ENCODE measurements at regions of chr7 and their contacts with region 1.

Region 1: GRCh38 chr7:11427686-11428273 is 404.2 kb downstream of the THSD7A start:
- DNase-seq: peak; percentile 30
- H3K4me3 Mint-ChIP-seq: no peak overlapping the region
- H3K27ac Mint-ChIP-seq: no peak overlapping the region
- H3K4me1 Mint-ChIP-seq: no peaks in the 10 kb centered on the region
- H3K27me3 Mint-ChIP-seq: no peaks in the 10 kb centered on the region
- CTCF ChIP-seq: peak; percentile 65

Region 2: DNA sequence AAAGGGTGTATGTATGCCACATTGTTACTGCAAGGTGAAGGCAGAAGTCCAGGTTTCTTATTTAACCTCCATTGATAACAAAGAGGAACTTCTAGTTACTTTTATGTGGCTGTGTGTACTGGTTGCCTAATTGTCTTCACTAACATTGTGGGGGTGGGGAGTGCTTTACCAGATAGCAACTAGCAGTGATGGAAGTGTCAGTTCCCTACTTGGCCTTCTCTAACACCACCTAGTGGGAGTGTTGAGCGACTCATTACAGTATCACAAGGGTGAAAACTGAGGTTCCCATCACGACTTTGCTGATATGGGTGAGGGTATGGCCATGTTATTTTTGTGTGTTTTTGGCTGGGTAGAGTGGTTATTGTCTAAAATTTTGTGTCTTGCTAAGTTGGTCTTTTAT is 129.8 kb after region 1 on chr7:
- CTCF ChIA-PET with region 1: no interaction called
- intact Hi-C with region 1: loop called (anchors 1 kb)
- DNase-seq: peak; percentile 66
- H3K4me3 Mint-ChIP-seq: no peak overlapping the region
- H3K27ac Mint-ChIP-seq: no peak overlapping the region
- H3K4me1 Mint-ChIP-seq: peaks cover 7% of the 10 kb centered on the region
- H3K27me3 Mint-ChIP-seq: no peaks in the 10 kb centered on the region
- CTCF ChIP-seq: peak; percentile 39

Region 3: GRCh38 chr7:12322284-12322902 is 894.6 kb after region 1 on chr7:
- CTCF ChIA-PET with region 1: no interaction called
- intact Hi-C with region 1: loop called (anchors 1 kb)
- DNase-seq: peak; percentile 21
- H3K4me3 Mint-ChIP-seq: no peak overlapping the region
- H3K27ac Mint-ChIP-seq: no peak overlapping the region
- H3K4me1 Mint-ChIP-seq: peaks cover 11% of the 10 kb centered on the region
- H3K27me3 Mint-ChIP-seq: no peaks in the 10 kb centered on the region
- CTCF ChIP-seq: peak; percentile 74

Measured in Calu3 (cell line).